Dendritic cell treated with granulocyte-macrophage colony-stimulating factor and Interleukin-4, amounts not matched to agents 40 ng/mL and 50 ng/mL, for 4 days (primary cell): ENCODE measurements at regions of chr17 and their contacts with region 1.

Region 1: GRCh38 chr17:68291844-68292695 is 775 bp downstream of the ARSG start:
- H3K4me3 Mint-ChIP-seq: peak overlapping the region; percentile 98
- H3K27ac Mint-ChIP-seq: peak overlapping the region; percentile 100
- H3K4me1 Mint-ChIP-seq: peaks cover 55% of the 10 kb centered on the region
- H3K27me3 Mint-ChIP-seq: no peaks in the 10 kb centered on the region

Region 2: GRCh38 chr17:68172461-68172954 is 119.6 kb before region 1 on chr17:
- intact Hi-C with region 1: no loop called
- H3K4me3 Mint-ChIP-seq: no peak overlapping the region
- H3K27ac Mint-ChIP-seq: no peak overlapping the region
- H3K4me1 Mint-ChIP-seq: peaks cover 4% of the 10 kb centered on the region
- H3K27me3 Mint-ChIP-seq: no peaks in the 10 kb centered on the region

Region 3: GRCh38 chr17:68238164-68238872 is 53.8 kb before region 1 on chr17:
- intact Hi-C with region 1: no loop called
- H3K4me3 Mint-ChIP-seq: peak overlapping the region; percentile 74
- H3K27ac Mint-ChIP-seq: peak overlapping the region; percentile 98
- H3K4me1 Mint-ChIP-seq: peaks cover 29% of the 10 kb centered on the region
- H3K27me3 Mint-ChIP-seq: no peaks in the 10 kb centered on the region

Region 4: DNA sequence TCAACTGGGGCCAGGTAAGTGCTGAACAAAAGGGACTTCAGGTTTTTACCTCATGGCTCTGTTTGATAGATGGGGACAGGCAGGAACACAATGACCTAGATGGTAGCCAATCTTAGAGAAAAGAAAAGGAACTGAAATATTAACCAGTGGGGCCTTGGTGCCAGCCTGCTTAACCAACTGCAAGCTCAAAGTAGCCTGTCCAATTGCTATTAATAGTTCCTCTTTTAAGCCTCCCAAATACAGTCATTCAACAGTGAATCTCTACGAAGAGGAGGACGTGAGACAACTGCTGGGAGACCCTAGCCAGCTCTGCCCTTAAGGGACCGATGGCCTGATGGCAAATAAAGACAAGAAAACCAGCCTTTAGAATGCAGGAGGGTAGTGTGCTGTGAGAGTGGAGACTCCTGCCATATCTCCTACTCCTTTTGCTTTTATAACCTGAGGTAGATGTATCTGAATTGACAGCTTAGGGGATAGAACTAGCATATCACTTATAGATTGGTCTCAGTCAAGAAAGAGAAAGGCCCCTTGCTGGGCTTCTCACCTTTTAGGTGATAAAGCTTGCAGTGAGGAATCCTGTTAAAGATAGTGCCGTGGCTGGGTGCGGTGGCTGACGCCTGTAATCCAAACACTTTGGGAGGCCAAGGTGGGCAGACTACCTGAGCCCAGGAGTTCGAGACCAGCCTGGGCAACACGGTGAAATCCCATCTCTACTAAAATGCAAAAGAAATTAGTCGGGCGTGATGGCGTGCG is 27.5 kb after region 1 on chr17:
- intact Hi-C with region 1: loop called (anchors 5 kb)
- H3K4me3 Mint-ChIP-seq: no peak overlapping the region
- H3K27ac Mint-ChIP-seq: peak overlapping the region; percentile 82
- H3K4me1 Mint-ChIP-seq: peaks cover 58% of the 10 kb centered on the region
- H3K27me3 Mint-ChIP-seq: no peaks in the 10 kb centered on the region

Region 5: DNA sequence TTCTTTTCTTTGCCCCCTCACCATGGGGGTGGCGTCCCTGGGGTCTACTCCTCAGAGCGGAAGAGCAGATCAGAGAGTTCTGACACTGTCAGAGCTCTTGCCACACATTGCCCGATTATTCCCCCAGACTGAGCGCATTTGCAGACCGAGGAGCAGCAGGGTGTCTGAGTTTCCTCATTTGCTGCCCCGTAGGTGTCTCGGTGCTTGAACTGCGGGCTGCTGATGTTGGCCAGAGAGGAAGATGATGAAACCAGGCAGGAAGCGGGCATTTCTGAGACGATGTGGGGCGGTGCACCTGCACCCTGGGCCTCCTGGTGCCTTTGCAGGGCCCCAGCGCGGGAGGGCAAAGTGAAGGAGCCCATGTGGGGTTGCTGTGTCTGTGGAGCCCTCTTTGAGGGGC is 54.4 kb after region 1 on chr17:
- intact Hi-C with region 1: loop called (anchors 5 kb)
- H3K4me3 Mint-ChIP-seq: no peak overlapping the region
- H3K27ac Mint-ChIP-seq: peak overlapping the region; percentile 43
- H3K4me1 Mint-ChIP-seq: peaks cover 53% of the 10 kb centered on the region
- H3K27me3 Mint-ChIP-seq: no peaks in the 10 kb centered on the region

Region 6: DNA sequence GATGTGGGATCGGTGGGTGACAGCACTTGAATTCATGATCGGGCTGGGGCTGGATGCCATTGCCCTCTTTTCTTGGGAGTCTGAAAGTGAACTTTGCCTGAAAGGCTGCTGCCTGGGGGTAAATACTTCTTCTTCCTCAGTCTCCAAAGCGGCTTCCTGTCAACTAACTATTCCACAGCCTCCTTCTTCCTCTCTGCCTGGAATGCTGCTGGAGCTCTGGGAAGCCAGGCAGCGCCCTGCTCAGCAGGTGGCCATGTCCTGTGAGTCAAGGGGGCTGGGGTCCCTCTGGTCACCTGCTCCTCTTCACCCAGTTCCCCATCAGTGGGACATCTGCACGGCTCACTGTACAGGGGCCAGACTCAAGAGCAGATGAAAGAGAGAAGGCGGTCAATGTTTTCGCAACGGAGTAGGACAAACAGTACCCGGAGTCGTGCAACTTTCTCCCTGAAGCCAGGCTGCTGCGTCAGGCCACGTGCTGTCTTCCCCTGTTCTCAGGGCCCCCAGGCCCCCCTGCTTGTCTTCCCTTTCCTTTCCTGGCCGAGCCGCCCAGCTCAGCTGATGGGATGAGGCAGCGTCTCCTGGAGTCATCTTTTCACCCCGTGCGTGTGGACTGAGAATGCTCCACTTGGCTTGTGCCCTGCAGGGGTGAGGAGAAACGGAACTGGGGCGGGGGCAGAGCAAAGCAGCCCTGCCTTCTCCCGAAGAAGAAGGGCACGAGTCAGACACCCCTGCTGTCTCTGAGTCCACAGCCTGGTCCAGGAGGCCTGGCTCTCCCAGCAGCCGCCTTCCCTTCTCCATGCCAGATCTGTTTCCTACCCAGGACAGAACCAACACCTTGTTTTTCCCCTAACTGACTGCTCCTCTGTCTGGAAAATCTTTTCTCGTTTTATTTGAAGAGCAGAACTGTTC is 86.0 kb after region 1 on chr17:
- intact Hi-C with region 1: loop called (anchors 2 kb)
- H3K4me3 Mint-ChIP-seq: peak overlapping the region; percentile 51
- H3K27ac Mint-ChIP-seq: peak overlapping the region; percentile 55
- H3K4me1 Mint-ChIP-seq: peaks cover 35% of the 10 kb centered on the region
- H3K27me3 Mint-ChIP-seq: no peaks in the 10 kb centered on the region

Region 7: GRCh38 chr17:68398691-68399637 is 106.9 kb after region 1 on chr17:
- intact Hi-C with region 1: loop called (anchors 5 kb)
- H3K4me3 Mint-ChIP-seq: no peak overlapping the region
- H3K27ac Mint-ChIP-seq: peak overlapping the region; percentile 37
- H3K4me1 Mint-ChIP-seq: peaks cover 23% of the 10 kb centered on the region
- H3K27me3 Mint-ChIP-seq: no peaks in the 10 kb centered on the region